HEK293T (cell line): ENCODE measurements at regions of chrX and their contacts with region 1.

Region 1: DNA sequence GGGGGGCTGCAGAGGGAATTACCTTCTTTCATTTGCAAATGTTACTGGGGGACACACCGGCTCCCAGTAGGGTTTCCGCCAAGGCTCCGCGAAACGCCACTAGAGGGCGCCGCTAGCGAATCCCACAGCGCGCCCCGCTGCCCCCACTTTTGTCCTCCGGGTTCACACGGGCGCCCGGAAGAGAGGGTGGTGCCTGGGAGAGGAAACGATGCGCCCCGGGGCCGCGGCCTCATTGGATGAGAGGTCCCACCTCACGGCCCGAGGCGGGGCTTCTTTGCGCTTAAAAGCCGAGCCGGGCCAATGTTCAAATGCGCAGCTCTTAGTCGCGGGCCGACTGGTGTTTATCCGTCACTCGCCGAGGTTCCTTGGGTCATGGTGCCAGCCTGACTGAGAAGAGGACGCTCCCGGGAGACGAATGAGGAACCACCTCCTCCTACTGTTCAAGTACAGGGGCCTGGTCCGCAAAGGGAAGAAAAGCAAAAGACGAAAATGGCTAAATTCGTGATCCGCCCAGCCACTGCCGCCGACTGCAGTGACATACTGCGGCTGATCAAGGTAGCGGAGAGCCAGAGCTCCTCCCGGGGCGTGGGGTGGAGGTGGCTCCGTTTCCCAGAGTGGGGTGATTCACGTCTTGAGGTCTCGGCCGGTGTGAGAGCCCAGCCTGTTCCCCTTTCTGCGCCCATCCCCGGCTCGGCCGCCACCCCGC is at the start of gene SAT1:
- DNase-seq: peak; percentile 87

Region 2: GRCh38 chrX:23803931-23804381 is 20.9 kb after region 1 on chrX:
- CTCF ChIA-PET with region 1: interaction called, 4 read pairs
- POLR2A ChIA-PET with region 1: interaction called, 27 read pairs
- DNase-seq: no peak

Region 3: DNA sequence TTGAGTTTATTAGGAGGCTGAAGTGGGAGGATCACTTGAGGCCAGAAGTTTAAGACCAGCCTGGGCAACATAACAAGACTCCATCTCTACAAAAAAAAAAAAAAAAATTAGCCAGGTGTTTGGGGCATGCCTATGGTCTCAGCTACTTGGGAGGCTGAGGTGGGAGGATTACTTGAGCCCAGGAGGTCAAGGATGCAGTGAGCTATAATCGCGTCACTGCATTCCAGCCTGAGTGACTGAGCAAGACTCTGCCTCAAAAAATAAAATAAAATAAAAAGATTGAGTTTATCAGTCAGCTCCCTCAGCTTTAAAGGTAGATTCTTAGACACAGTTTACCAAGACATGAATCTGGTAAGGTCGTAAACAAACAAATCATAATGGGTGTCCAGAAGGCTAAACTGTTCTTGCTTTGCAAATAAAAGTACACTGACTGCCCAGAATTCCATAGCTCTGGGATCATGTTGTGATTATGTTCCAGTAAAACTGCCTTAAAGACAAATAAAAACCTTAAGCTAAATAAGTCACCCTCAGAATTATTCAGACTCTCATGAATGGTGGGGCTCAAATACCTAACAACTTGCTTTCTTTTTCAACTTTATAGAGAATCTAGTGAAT is 106.0 kb after region 1 on chrX:
- CTCF ChIA-PET with region 1: interaction called, 4 read pairs
- POLR2A ChIA-PET with region 1: interaction called, 15 read pairs
- DNase-seq: no peak